Endothelial cell of umbilical vein (primary cell): ENCODE measurements at regions of chr1 and their contacts with region 1.

Region 1: GRCh38 chr1:245156081-245156735 is 1.4 kb downstream of the KIF26B start:
- DNase-seq: peak; percentile 60
- H3K4me3 ChIP-seq: peak overlapping the region; percentile 10 to 51 (median 45)
- H3K27ac ChIP-seq: no peak overlapping the region
- H3K4me1 ChIP-seq: peaks cover 28% of the 10 kb centered on the region
- H3K27me3 ChIP-seq: peaks cover 24 to 56% of the 10 kb centered on the region in 2 experiments
- CTCF ChIP-seq: peak; percentile 65 to 75
- POLR2A ChIP-seq: no peak

Region 2: DNA sequence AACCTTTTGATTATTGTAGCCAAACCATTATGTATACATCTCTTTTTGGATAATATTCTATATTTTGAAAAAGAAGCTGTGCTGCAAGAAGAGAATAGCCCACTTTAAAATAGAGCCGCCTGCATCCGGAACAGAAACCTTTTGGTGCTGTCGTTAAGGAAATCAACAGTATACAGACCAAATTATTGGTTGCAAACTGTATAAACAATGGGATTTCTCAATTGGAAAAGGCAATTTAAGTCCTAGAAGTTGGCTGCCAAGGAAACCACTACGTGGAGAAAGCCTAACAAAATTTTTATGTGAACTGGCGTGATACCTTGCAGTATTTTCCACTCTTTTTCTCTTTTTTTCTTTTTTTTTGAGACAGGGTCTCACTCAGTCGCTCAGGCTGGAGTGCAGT is 477.5 kb before region 1 on chr1:
- CTCF ChIA-PET with region 1: no interaction called
- POLR2A ChIA-PET with region 1: no interaction called
- dilution Hi-C with region 1: no loop called
- intact Hi-C with region 1: no loop called
- DNase-seq: peak; percentile 21
- H3K4me3 ChIP-seq: no peak overlapping the region
- H3K27ac ChIP-seq: no peak overlapping the region
- H3K4me1 ChIP-seq: no peaks in the 10 kb centered on the region
- H3K27me3 ChIP-seq: no peaks in the 10 kb centered on the region
- CTCF ChIP-seq: no peak
- POLR2A ChIP-seq: no peak

Region 3: DNA sequence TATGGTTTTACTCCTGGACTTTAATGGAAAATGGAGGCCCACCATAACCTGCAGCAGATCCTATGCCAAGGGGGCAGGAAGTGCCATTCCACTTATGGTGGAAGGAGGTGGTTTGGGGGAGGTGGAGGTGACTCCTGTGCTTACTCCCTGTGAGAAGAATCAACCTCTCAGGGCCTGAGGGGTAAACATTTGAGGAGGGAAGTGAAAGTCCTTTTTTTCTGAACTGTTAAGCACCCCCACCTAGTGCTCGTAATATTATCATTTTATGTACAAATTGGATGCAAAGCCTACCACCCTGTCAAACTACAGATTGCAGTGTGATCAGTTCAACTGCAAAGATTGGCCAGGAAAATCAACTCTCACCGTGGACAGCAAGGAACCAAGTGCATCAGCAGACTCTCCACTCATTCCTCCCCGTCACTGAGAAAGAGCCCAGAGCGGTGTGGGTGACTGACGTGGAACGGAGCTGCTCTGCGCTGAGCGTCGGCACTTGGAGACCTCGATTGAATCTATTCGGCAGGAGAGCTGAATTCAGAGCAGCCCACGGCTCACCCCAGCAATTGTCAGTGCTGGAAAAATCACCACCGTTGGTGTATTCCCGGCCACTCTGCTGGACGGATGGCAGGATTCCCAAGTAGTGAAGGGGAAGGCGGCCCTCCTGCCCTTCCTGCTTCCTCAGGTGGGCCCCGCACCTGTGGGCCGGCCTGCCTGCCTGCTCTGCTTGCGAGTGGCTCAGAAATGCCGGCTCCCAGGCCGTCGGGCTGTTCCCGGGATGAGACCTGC is 367.5 kb before region 1 on chr1:
- CTCF ChIA-PET with region 1: no interaction called
- POLR2A ChIA-PET with region 1: no interaction called
- dilution Hi-C with region 1: no loop called
- intact Hi-C with region 1: no loop called
- DNase-seq: no peak
- H3K4me3 ChIP-seq: no peak overlapping the region
- H3K27ac ChIP-seq: no peak overlapping the region
- H3K4me1 ChIP-seq: no peaks in the 10 kb centered on the region
- H3K27me3 ChIP-seq: peaks cover 0 to 2% of the 10 kb centered on the region in 2 experiments
- CTCF ChIP-seq: no peak
- POLR2A ChIP-seq: no peak

Region 4: DNA sequence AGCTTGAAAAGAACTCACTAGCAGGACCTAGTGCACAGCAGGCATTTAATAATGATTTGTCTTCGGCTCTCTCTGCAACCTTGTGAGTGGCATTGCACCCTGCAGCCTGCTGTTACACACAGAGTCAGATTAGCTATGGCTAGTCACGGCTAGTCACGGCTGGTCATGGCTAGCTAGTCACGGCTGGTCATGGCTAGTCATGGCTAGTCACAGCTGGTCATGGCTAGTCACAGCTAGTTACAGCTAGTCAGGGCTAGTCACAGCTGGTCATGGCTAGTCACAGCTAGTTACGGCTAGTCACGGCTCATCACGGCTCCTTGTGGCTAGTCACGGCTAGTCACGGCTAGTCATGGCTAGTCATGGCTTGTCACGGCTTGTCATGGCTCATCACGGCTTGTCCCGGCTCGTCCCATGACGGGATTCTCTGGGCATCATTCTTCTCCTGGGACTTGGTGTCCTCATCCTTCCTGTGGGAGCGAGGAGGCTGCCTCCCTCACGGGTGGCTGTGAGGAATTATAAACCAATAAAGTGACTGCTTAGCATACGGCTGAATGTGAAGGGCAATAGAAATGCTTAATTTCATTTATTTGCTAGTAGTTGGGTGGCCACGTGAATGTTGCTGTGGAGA is 13.9 kb before region 1 on chr1:
- CTCF ChIA-PET with region 1: interaction called, 16 read pairs
- POLR2A ChIA-PET with region 1: no interaction called
- dilution Hi-C with region 1: no loop called
- intact Hi-C with region 1: no loop called
- DNase-seq: no peak
- H3K4me3 ChIP-seq: no peak overlapping the region
- H3K27ac ChIP-seq: no peak overlapping the region
- H3K4me1 ChIP-seq: no peaks in the 10 kb centered on the region
- H3K27me3 ChIP-seq: peaks cover 0 to 2% of the 10 kb centered on the region in 2 experiments
- CTCF ChIP-seq: no peak
- POLR2A ChIP-seq: no peak

Region 5: DNA sequence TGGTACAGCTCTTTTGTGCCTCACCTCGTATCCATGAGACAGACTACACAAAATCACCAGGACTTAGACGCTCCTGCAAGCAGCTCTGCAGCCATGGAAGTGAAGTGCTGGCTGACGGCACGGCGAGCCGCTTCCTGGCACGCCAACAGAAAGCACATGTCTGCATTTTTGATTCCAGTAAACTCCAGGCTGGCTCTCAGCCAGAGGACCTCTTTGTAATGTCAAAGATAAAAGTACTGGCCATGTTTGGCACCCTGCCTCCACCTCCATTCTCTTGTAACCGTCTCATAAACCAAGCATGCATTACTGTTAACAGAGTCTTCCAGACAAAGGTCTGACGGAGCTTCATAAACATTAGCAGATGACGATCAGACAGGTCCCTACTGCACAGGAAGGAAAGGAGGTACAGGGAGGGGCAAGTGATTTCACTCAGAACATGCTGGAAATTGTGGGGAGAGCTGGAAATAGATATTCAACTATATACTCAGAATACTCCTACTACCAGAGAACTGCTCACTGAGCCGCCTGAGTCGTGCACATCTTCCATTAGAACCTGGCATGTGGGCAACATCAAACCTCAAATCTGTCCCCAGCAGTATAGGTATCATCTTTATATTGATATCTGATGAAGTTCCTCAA is 718.9 kb after region 1 on chr1:
- CTCF ChIA-PET with region 1: interaction called, 8 read pairs
- POLR2A ChIA-PET with region 1: no interaction called
- dilution Hi-C with region 1: no loop called
- intact Hi-C with region 1: loop called (anchors 2 kb)
- DNase-seq: peak; percentile 95
- H3K4me3 ChIP-seq: no peak overlapping the region
- H3K27ac ChIP-seq: peak overlapping the region; percentile 50
- H3K4me1 ChIP-seq: peaks cover 22% of the 10 kb centered on the region
- H3K27me3 ChIP-seq: no peaks in the 10 kb centered on the region
- CTCF ChIP-seq: no peak
- POLR2A ChIP-seq: no peak

Region 6: DNA sequence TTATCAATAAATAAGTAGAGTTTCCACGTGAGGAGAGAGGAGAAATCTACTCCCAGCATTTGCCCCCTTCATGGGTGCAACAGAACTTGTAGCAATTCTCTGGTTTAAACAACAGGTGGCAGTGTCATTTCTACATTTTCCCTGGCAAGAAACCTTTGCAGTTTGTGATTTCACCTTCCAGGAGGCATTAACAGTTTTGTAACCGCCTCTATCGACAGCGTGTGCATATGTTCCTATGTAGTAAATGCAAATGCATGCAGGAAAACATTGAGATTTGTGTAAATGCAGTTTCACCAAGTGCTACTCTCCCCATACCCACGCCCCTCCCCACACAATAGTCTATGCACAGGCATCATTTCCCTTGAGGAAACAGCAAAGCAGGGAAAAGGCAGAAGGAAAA is 856.1 kb after region 1 on chr1:
- CTCF ChIA-PET with region 1: interaction called, 128 read pairs
- POLR2A ChIA-PET with region 1: no interaction called
- dilution Hi-C with region 1: no loop called
- intact Hi-C with region 1: no loop called
- DNase-seq: peak; percentile 63
- H3K4me3 ChIP-seq: no peak overlapping the region
- H3K27ac ChIP-seq: no peak overlapping the region
- H3K4me1 ChIP-seq: no peaks in the 10 kb centered on the region
- H3K27me3 ChIP-seq: no peaks in the 10 kb centered on the region
- CTCF ChIP-seq: peak; percentile 48 to 54
- POLR2A ChIP-seq: no peak

Region 7: DNA sequence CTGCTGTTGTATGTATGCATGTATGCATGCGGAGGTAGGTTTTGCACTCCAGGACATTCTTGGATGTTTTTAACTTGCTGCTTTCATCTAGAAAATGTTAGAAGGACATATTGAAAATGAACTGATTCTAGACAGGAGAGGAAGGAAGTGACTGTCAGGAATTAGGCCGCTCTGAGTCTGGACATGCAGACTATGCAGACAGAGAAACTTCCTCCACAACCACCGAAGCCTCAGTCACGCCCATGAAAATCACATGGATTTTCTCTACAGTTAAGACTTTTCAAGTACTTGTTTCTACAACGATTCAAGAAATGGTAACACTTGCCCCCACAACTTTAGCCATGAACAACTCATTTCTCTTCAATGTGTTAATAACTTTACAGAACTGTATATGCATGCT is 1139.8 kb after region 1 on chr1:
- CTCF ChIA-PET with region 1: no interaction called
- POLR2A ChIA-PET with region 1: no interaction called
- dilution Hi-C with region 1: no loop called
- intact Hi-C with region 1: loop called (anchors 5 kb)
- DNase-seq: peak; percentile 53
- H3K4me3 ChIP-seq: no peak overlapping the region
- H3K27ac ChIP-seq: peak overlapping the region; percentile 78
- H3K4me1 ChIP-seq: peaks cover 43% of the 10 kb centered on the region
- H3K27me3 ChIP-seq: no peaks in the 10 kb centered on the region
- CTCF ChIP-seq: no peak
- POLR2A ChIP-seq: no peak

Region 8: DNA sequence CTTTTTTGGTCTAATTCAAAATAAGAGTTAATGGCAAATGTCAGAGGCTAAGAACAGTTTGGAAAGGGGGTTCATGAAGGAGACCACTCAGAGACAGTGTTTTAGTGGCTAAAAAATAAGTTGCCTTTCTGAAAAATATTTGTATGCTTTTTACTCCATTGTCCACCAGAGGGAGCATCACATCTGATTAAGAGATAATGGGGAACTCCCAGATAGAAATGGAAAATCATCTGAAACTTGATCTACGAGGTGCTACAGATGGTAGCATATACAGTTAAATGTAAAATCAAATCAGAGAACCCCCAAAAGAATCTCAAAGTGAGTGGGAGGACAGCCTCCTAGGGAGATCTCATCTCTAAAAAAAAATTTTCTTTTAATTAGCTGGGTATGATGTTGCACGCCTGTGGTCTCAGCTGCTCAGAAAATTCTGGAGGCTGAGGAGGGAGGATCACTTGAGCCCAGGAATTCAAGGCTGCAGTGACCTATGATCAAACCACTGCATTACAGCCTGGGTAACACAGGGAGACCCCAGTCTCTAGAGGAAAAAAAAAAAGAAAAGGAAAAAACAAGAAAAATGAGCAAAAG is 1341.2 kb after region 1 on chr1:
- CTCF ChIA-PET with region 1: interaction called, 19 read pairs
- POLR2A ChIA-PET with region 1: no interaction called
- dilution Hi-C with region 1: no loop called
- intact Hi-C with region 1: loop called (anchors 1 kb)
- DNase-seq: peak; percentile 77
- H3K4me3 ChIP-seq: no peak overlapping the region
- H3K27ac ChIP-seq: no peak overlapping the region
- H3K4me1 ChIP-seq: no peaks in the 10 kb centered on the region
- H3K27me3 ChIP-seq: no peaks in the 10 kb centered on the region
- CTCF ChIP-seq: peak; percentile 38 to 45
- POLR2A ChIP-seq: no peak